Aorta (tissue), 5 donors: ENCODE measurements at regions of chr15 and their contacts with region 1.

Region 1: GRCh38 chr15:83066734-83067637 is at the start of gene BTBD1:
- DNase-seq: peak; percentile 98 to 99
- ATAC-seq: peak; percentile 100
- H3K4me3 ChIP-seq: peak within 1 kb of the TSS; percentile 80 to 96
- H3K27ac ChIP-seq: peak within 1 kb of the TSS; percentile 92 to 95
- H3K4me1 ChIP-seq: peaks cover 0 to 5% of the 10 kb centered on the region in 2 donors
- H3K27me3 ChIP-seq: no peaks in the 10 kb centered on the region
- total RNA-seq, gene BTBD1: 38.3 to 47.8 TPM

Region 2: GRCh38 chr15:82530606-82531379 is 536.2 kb before region 1 on chr15:
- intact Hi-C with region 1: loop called in 1 of 2 experiments (anchors 10 kb)
- DNase-seq: peak; percentile 68 to 88
- ATAC-seq: no peak
- H3K4me3 ChIP-seq: no peak overlapping the region
- H3K27ac ChIP-seq: no peak overlapping the region
- H3K4me1 ChIP-seq: no peaks in the 10 kb centered on the region
- H3K27me3 ChIP-seq: no peaks in the 10 kb centered on the region

Region 3: DNA sequence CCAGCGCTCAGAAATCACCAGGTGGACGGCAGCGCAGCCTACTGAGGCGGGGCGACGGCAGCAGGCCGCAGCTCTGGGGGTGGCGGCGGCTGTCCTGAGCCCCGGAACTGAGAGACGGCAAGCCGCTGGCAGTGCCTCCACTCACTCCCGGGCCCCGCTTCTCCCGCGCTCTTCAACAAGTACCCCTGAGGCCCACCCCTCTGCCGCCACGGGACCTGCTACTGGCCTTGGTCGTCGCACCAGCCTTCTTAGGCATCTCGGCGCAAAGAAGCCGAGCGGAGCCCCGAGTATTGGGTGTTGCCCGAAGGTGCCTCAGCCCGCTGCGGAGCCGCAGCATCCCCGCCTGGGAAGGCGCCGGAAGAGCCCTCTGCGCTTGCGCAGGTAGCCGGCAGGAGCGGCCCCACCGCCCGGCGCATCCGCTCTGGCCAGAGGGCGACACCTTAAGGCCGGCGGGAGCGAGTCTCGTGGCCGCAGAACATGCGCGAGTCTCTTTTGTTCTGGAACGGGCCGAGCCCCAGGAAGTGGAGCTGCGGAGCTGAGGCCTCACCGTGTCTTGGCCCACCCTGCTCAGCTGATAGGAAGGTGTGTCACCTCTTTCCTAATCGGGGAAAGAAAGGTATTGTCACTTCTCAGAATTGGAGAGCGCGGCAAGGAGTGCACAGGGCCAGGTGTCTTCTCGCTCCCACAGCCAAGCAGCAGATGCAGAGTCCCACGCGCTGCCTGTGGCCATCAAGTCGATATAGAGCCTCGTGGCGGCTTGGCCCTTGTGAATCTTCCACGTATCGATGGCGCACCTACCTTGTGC is 55.5 kb before region 1 on chr15 and contains the start of gene C15orf40:
- intact Hi-C with region 1: loop called in 1 of 2 experiments (anchors 5 kb)
- DNase-seq: peak; percentile 94 to 96
- ATAC-seq: peak; percentile 99
- H3K4me3 ChIP-seq: peak within 1 kb of the TSS; percentile 69 to 97
- H3K27ac ChIP-seq: peak within 1 kb of the TSS in 1 of 2 donors; percentile 34
- H3K4me1 ChIP-seq: peaks cover 0 to 4% of the 10 kb centered on the region in 2 donors
- H3K27me3 ChIP-seq: no peaks in the 10 kb centered on the region
- total RNA-seq, gene C15orf40: 15.0 to 15.3 TPM

Region 4: GRCh38 chr15:83108266-83109226 is 41.6 kb after region 1 on chr15:
- intact Hi-C with region 1: loop called in 1 of 2 experiments (anchors 2 kb)
- DNase-seq: peak; percentile 77 to 88
- ATAC-seq: peak; percentile 69
- H3K4me3 ChIP-seq: peak overlapping the region in 1 of 2 donors; percentile 24
- H3K27ac ChIP-seq: no peak overlapping the region
- H3K4me1 ChIP-seq: no peaks in the 10 kb centered on the region
- H3K27me3 ChIP-seq: no peaks in the 10 kb centered on the region